Panc1 (cell line): ENCODE measurements at regions of chr18 and their contacts with region 1.

Region 1: GRCh38 chr18:79657342-79657985 is 22.1 kb upstream of the CTDP1 start:
- DNase-seq: no peak
- ATAC-seq: peak; percentile 72
- H3K4me3 ChIP-seq: no peak overlapping the region
- H3K27ac ChIP-seq: no peak overlapping the region
- H3K4me1 ChIP-seq: no peaks in the 10 kb centered on the region
- H3K27me3 ChIP-seq: peaks cover 38% of the 10 kb centered on the region
- CTCF ChIP-seq: peak; percentile 32; the same call in 1 of the 2 replicates

Region 2: DNA sequence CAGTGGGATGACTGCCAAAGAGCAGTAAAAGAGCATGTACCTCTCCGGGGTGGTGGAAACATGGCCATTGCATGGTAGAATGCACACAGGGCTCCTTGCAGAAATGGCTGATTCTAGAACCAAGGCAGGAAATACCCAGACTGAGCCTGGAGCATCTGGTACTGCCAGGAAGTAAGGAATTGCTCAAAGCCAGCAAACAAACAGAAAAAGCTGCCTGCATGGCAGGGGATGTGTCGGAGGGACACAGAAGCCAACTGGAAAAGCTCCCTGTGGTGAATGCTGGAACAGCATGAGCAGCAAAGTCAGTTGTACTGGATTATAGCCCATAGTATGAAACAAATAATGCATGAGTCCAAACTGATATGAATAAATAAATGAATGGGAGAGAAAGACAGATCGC is 339.7 kb before region 1 on chr18:
- CTCF ChIA-PET with region 1: interaction called, 17 read pairs
- POLR2A ChIA-PET with region 1: no interaction called
- in situ Hi-C with region 1: no loop called
- intact Hi-C with region 1: no loop called
- DNase-seq: no peak
- ATAC-seq: peak; percentile 47; the same call in 1 of the 2 replicates
- H3K4me3 ChIP-seq: no peak overlapping the region
- H3K27ac ChIP-seq: no peak overlapping the region
- H3K4me1 ChIP-seq: no peaks in the 10 kb centered on the region
- H3K27me3 ChIP-seq: no peaks in the 10 kb centered on the region
- CTCF ChIP-seq: no peak